Activated CD8-positive, alpha-beta memory T cell treated with anti-CD3 and anti-CD28 coated beads, Interleukin-2, amount 10 ng/mL, durations not matched to agents 7 days and 5 days (primary cell): ENCODE measurements at regions of chr1 and their contacts with region 1.

Region 1: GRCh38 chr1:151294742-151295462 is 12.8 kb downstream of the ZNF687 start:
- DNase-seq: no peak
- ATAC-seq: no peak
- H3K4me3 Mint-ChIP-seq: no peak overlapping the region
- H3K27ac Mint-ChIP-seq: no peak overlapping the region
- H3K4me1 Mint-ChIP-seq: no peaks in the 10 kb centered on the region
- H3K27me3 Mint-ChIP-seq: no peaks in the 10 kb centered on the region

Region 2: GRCh38 chr1:151113877-151114276 is 181.0 kb before region 1 on chr1:
- CTCF ChIA-PET with region 1: no interaction called
- DNase-seq: no peak
- ATAC-seq: no peak
- H3K4me3 Mint-ChIP-seq: no peak overlapping the region
- H3K27ac Mint-ChIP-seq: no peak overlapping the region
- H3K4me1 Mint-ChIP-seq: no peaks in the 10 kb centered on the region
- H3K27me3 Mint-ChIP-seq: no peaks in the 10 kb centered on the region

Region 3: DNA sequence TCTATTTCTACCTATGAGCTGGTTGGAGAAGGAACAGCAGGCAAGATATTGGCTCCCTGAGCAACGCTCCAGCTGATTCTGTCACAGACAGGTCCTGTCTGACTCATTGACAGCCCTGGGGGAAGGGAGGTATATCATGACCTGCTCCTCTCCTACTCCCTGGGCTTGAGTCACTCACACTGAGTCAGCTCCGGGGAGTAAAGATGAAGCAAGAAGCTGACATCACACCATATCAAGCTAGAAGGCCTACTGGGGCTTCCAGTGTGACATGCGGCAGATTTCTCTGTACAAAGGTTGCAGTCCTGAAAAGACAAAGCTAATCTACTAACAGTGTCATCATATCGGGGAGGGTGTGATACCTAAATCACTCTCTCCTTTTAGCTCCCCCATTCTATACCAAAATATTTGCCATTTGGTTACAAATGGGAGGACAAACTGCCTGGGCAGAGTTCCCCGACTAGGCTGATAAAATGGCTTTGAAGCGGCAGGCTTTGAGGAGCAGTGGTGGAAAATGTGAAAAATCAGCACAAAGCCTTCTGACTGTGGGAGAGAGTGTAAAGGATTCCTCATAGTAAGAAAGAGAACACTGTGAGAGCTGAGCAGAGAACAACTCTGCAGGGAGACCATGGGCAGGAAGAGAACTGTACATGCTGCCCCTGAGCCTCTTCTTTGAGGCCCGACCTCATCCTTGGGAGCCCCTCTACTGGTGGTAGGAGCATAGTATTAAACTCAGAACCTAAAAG is 16.9 kb after region 1 on chr1:
- CTCF ChIA-PET with region 1: interaction called, 44 read pairs
- DNase-seq: peak; percentile 86
- ATAC-seq: peak; percentile 100
- H3K4me3 Mint-ChIP-seq: no peak overlapping the region
- H3K27ac Mint-ChIP-seq: peak overlapping the region; percentile 82
- H3K4me1 Mint-ChIP-seq: peaks cover 24% of the 10 kb centered on the region
- H3K27me3 Mint-ChIP-seq: no peaks in the 10 kb centered on the region